CD8-positive, alpha-beta memory T cell (primary cell): ENCODE measurements at regions of chr5 and their contacts with region 1.

Region 1: DNA sequence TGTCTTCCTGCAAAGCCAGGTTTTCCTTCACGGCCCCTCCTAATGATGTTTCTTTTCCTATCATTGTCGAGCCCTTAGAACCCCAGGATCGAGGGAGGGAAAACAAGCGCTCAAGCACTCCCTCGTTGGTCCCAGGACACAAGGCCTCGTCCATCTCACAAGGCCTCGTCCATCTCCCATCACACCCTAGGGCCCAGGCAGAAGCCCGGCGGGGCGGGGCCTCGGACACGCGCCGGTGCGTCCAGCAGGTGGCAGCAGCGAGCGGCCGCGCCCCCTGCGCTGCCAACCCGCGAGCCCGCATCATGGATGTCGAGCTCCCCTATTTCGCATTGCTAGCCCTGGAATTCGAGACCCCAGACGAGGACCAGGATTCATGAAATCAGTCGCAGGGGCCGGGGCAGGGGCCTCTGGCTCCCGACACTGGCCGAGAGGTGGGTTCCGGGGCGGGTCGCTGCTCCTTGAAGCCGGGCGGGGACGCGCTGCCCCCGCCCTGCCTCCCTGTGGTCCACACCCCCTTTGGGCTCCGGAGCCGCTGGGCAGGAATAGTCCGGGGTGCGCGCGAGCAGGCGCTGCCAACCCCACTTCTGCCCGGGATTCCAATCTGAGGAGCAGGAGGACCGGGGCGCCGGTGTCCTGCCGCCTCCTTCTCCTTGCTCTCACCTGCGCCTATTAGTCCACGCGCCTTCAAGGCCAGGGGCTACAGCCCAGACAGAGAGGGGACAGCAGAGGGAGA is at the start of gene ABLIM3:
- DNase-seq: peak; percentile 56 to 73 (median 61)
- H3K4me3 ChIP-seq: peak within 1 kb of the TSS; percentile 56
- H3K4me3 Mint-ChIP-seq: peak within 1 kb of the TSS; percentile 34 to 75 (median 51)
- H3K27ac ChIP-seq: no peak within 1 kb of the TSS
- H3K27ac Mint-ChIP-seq: peak within 1 kb of the TSS in 1 of 8 donors; percentile 52
- H3K4me1 ChIP-seq: peaks cover 5% of the 10 kb centered on the region
- H3K4me1 Mint-ChIP-seq: peaks cover 1 to 4% (median 4%) of the 10 kb centered on the region in 3 donors
- H3K27me3 ChIP-seq: peaks cover 8% of the 10 kb centered on the region
- H3K27me3 Mint-ChIP-seq: peaks cover 22 to 39% of the 10 kb centered on the region in 2 donors
- total RNA-seq, gene ABLIM3: 0.09 TPM in 1 of 2 experiments, not detected in the other

Region 2: DNA sequence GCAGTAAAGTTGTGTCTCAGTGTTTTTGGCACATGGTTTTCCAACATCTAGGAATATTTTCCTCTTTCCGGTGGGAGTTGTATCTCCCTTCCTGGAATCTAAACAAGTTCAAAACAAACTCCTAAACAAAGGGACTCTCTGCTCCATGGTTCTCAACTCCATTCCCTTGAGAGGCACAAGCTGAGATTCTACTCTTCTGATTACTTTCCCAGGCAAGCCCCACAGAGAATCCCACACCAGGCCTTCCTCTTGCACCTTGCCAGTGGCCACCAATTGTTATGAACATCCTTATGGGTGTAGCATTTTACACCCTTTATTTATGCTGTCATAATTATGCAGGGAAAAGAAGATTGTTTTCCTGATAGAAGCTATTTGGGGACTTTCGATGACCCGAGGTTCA is 52.7 kb before region 1 on chr5:
- CTCF ChIA-PET with region 1: no interaction called
- POLR2A ChIA-PET with region 1: no interaction called
- DNase-seq: no peak
- H3K4me3 ChIP-seq: no peak overlapping the region
- H3K4me3 Mint-ChIP-seq: no peak overlapping the region
- H3K27ac ChIP-seq: no peak overlapping the region
- H3K27ac Mint-ChIP-seq: peak overlapping the region in 1 of 8 donors; percentile 8
- H3K4me1 ChIP-seq: no peaks in the 10 kb centered on the region
- H3K4me1 Mint-ChIP-seq: no peaks in the 10 kb centered on the region
- H3K27me3 ChIP-seq: no peaks in the 10 kb centered on the region
- H3K27me3 Mint-ChIP-seq: peaks cover 17 to 51% of the 10 kb centered on the region in 2 donors

Region 3: DNA sequence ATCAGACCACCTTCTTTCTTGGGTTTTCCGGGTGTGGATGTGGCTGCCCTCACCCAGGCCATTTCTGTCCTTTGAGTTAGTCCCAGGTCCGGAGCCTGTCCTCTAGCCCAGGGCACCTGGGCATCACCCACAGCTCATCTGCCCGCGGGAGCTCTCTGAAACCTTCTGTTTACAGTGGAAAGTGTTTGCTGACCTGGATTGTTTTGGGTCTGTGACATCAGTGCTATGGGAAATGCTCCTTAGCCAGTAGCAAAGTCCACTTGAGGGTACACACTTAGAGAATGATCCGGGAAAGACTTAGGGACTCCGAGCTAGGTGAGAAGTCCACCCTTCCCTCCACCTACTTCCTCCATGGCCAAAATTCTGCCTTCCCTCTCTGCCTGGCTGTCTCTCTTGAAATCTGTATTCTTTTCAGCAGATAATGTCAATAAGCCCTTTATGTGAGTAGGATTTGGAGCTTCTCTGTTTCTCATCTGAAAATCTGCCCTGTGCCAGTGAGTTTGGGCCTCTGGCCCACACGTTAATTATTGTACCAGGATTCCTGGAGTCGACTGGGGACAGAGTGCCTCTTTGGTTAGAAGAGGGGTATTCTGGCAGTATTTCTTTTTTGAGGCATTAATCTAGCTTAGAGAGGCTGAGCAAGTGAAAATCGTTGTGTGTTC is 19.8 kb after region 1 on chr5:
- CTCF ChIA-PET with region 1: no interaction called
- POLR2A ChIA-PET with region 1: no interaction called
- DNase-seq: no peak
- H3K4me3 ChIP-seq: no peak overlapping the region
- H3K4me3 Mint-ChIP-seq: no peak overlapping the region
- H3K27ac ChIP-seq: no peak overlapping the region
- H3K27ac Mint-ChIP-seq: peak overlapping the region in 1 of 8 donors; percentile 83
- H3K4me1 ChIP-seq: no peaks in the 10 kb centered on the region
- H3K4me1 Mint-ChIP-seq: no peaks in the 10 kb centered on the region
- H3K27me3 ChIP-seq: no peaks in the 10 kb centered on the region
- H3K27me3 Mint-ChIP-seq: peaks cover 3 to 16% of the 10 kb centered on the region in 2 donors

Region 4: GRCh38 chr5:149240354-149240998 is 99.1 kb after region 1 on chr5:
- CTCF ChIA-PET with region 1: interaction called, 12 read pairs
- POLR2A ChIA-PET with region 1: no interaction called
- DNase-seq: peak; percentile 51 to 90 (median 64)
- H3K4me3 ChIP-seq: peak overlapping the region; percentile 38
- H3K4me3 Mint-ChIP-seq: peak overlapping the region; percentile 9 to 78 (median 34)
- H3K27ac ChIP-seq: no peak overlapping the region
- H3K27ac Mint-ChIP-seq: peak overlapping the region; percentile 42 to 91 (median 83)
- H3K4me1 ChIP-seq: peaks cover 28% of the 10 kb centered on the region
- H3K4me1 Mint-ChIP-seq: peaks cover 11 to 50% (median 35%) of the 10 kb centered on the region in 3 donors
- H3K27me3 ChIP-seq: no peaks in the 10 kb centered on the region
- H3K27me3 Mint-ChIP-seq: peaks cover 20 to 21% of the 10 kb centered on the region in 2 donors

Region 5: GRCh38 chr5:149268928-149269557 is 127.7 kb after region 1 on chr5:
- CTCF ChIA-PET with region 1: interaction called, 50 read pairs
- POLR2A ChIA-PET with region 1: no interaction called
- DNase-seq: peak in 2 of 5 donors; percentile 23 to 58
- H3K4me3 ChIP-seq: no peak overlapping the region
- H3K4me3 Mint-ChIP-seq: no peak overlapping the region
- H3K27ac ChIP-seq: no peak overlapping the region
- H3K27ac Mint-ChIP-seq: no peak overlapping the region
- H3K4me1 ChIP-seq: no peaks in the 10 kb centered on the region
- H3K4me1 Mint-ChIP-seq: peaks cover 10 to 16% (median 12%) of the 10 kb centered on the region in 3 donors
- H3K27me3 ChIP-seq: peaks cover 5% of the 10 kb centered on the region
- H3K27me3 Mint-ChIP-seq: peaks cover 49 to 51% of the 10 kb centered on the region in 2 donors

Region 6: GRCh38 chr5:149381987-149382340 is 240.6 kb after region 1 on chr5:
- CTCF ChIA-PET with region 1: no interaction called
- POLR2A ChIA-PET with region 1: no interaction called
- DNase-seq: peak; percentile 39 to 74 (median 55)
- H3K4me3 ChIP-seq: no peak overlapping the region
- H3K4me3 Mint-ChIP-seq: no peak overlapping the region
- H3K27ac ChIP-seq: no peak overlapping the region
- H3K27ac Mint-ChIP-seq: peak overlapping the region in 1 of 8 donors; percentile 39
- H3K4me1 ChIP-seq: no peaks in the 10 kb centered on the region
- H3K4me1 Mint-ChIP-seq: peaks cover 0 to 6% (median 4%) of the 10 kb centered on the region in 3 donors
- H3K27me3 ChIP-seq: no peaks in the 10 kb centered on the region
- H3K27me3 Mint-ChIP-seq: peaks cover 9 to 18% of the 10 kb centered on the region in 2 donors

Region 7: GRCh38 chr5:149497357-149497756 is 356.0 kb after region 1 on chr5:
- CTCF ChIA-PET with region 1: no interaction called
- POLR2A ChIA-PET with region 1: no interaction called
- DNase-seq: no peak
- H3K4me3 ChIP-seq: no peak overlapping the region
- H3K4me3 Mint-ChIP-seq: no peak overlapping the region
- H3K27ac ChIP-seq: no peak overlapping the region
- H3K27ac Mint-ChIP-seq: peak overlapping the region in 5 of 8 donors; percentile 37 to 84 (median 57)
- H3K4me1 ChIP-seq: no peaks in the 10 kb centered on the region
- H3K4me1 Mint-ChIP-seq: no peaks in the 10 kb centered on the region
- H3K27me3 ChIP-seq: no peaks in the 10 kb centered on the region
- H3K27me3 Mint-ChIP-seq: no peaks in the 10 kb centered on the region